Activated T-helper 2 cell treated with anti-CD3 and anti-CD28 coated beads, Interferon-gamma antibody, Interleukin-2, Interleukin-4, amounts not matched to agents 10 μg/mL and 5 μg/mL and 100 μg/mL, durations not matched to agents 14 hours and 24 hours and 36 hours (primary cell): ENCODE measurements at regions of chr4 and their contacts with region 1.

Region 1: GRCh38 chr4:80184053-80184790 is 13.1 kb upstream of the PRDM8 start:
- DNase-seq: peak; percentile 89
- H3K4me3 Mint-ChIP-seq: peak overlapping the region; percentile 99
- H3K27ac Mint-ChIP-seq: peak overlapping the region; percentile 95
- H3K4me1 Mint-ChIP-seq: peaks cover 49% of the 10 kb centered on the region
- H3K27me3 Mint-ChIP-seq: peaks cover 35% of the 10 kb centered on the region

Region 2: DNA sequence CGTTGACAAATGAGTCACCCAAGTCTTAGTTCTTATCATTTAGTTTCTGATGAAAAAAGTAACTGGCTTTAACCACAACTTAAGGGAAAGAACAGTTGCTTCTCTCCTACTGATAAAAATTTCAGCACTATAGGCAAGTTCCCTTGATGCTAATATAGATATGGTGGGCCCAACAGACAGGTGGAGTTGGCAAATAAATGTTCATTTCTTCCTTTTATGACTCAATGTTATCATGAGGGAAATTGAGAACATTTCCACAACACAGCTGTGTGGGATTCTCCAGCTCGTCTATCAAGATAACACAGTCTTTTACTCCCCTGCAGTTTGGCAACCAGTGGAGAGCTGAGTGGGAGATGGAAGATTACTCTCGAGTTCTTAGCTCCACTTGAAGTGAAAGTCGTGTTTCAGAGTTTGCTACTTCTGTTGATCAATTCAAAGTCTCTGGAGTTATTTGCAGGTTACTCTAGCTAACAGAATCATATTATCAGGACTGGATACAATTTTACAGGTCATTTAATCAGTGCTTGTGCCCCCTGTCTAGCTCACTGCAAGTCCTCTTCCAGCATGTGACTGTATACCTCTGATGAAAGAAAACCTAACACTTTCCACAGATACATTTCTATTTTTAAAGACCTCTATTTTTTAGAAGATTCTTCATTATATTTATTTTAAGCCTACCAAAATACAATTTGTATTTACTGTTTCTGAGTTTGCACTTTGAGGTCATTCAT is 505.6 kb before region 1 on chr4:
- intact Hi-C with region 1: loop called (anchors 5 kb)
- DNase-seq: no peak
- H3K4me3 Mint-ChIP-seq: no peak overlapping the region
- H3K27ac Mint-ChIP-seq: peak overlapping the region; percentile 14
- H3K4me1 Mint-ChIP-seq: peaks cover 29% of the 10 kb centered on the region
- H3K27me3 Mint-ChIP-seq: peaks cover 6% of the 10 kb centered on the region

Region 3: GRCh38 chr4:80007745-80008149 is 176.5 kb before region 1 on chr4:
- intact Hi-C with region 1: loop called (anchors 1 kb)
- DNase-seq: no peak
- H3K4me3 Mint-ChIP-seq: no peak overlapping the region
- H3K27ac Mint-ChIP-seq: peak overlapping the region; percentile 78
- H3K4me1 Mint-ChIP-seq: peaks cover 60% of the 10 kb centered on the region
- H3K27me3 Mint-ChIP-seq: no peaks in the 10 kb centered on the region

Region 4: DNA sequence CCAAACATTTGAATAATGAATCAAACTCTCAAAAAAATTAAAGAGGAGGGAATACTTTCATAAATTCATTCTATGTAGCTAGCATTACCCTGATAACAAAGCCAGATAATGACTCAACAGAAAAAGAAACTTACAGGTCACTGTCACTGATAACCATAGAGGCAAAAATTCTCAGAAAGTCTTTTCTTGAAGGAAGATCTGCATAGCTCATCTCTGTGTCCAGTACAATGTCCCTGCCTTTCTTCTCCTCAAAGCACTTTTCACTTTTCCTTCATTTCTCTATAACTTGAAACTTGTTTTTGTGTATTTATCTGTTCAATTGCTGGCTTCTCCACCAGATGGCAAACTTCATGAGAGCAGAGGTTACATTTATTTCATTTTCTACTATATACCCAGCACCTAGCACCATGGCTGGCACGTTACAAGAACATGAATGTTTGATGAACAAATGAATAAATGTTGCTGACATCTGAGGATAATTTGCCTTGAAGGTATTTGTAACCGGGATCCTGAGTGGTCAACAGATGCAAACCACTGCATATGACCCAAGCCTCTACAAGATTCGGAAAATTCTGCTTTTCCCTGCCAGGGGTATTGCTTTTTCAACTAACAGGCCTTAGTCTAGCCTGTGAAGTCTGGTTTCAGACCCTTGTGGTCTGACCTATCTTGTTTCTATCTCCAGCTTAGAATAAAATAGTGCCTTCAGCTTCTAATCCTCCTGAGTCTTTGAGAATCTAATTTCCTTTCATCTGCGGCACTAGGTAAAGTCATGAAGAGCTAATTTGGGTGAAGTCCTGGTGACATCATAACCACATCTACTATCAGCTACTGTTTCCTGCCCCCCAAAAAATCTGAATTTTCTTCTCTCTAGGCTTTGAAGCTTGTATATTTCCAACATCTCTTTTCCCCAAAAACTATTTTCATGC is 58.7 kb before region 1 on chr4:
- intact Hi-C with region 1: loop called (anchors 1 kb)
- DNase-seq: peak; percentile 30
- H3K4me3 Mint-ChIP-seq: peak overlapping the region; percentile 1
- H3K27ac Mint-ChIP-seq: peak overlapping the region; percentile 55
- H3K4me1 Mint-ChIP-seq: peaks cover 59% of the 10 kb centered on the region
- H3K27me3 Mint-ChIP-seq: no peaks in the 10 kb centered on the region

Region 5: GRCh38 chr4:80173401-80173800 is 10.8 kb before region 1 on chr4:
- intact Hi-C with region 1: loop called (anchors 1 kb)
- DNase-seq: peak; percentile 53
- H3K4me3 Mint-ChIP-seq: peak overlapping the region; percentile 37
- H3K27ac Mint-ChIP-seq: peak overlapping the region; percentile 89
- H3K4me1 Mint-ChIP-seq: peaks cover 47% of the 10 kb centered on the region
- H3K27me3 Mint-ChIP-seq: no peaks in the 10 kb centered on the region